HCT116 (cell line): ENCODE measurements at regions of chr6 and their contacts with region 1.

Region 1: GRCh38 chr6:156686995-156687788 is 90.0 kb upstream of the ARID1B start:
- DNase-seq: peak; percentile 40
- ATAC-seq: peak; percentile 87
- H3K4me3 ChIP-seq: peak overlapping the region; percentile 65 to 72
- H3K27ac ChIP-seq: peak overlapping the region; percentile 95
- H3K4me1 ChIP-seq: peaks cover 12 to 24% of the 10 kb centered on the region in 2 experiments
- H3K27me3 ChIP-seq: no peaks in the 10 kb centered on the region
- CTCF ChIP-seq: no peak
- POLR2A ChIP-seq: peak; percentile 39
- RAD21 ChIP-seq: no peak

Region 2: GRCh38 chr6:156662025-156662445 is 25.2 kb before region 1 on chr6:
- CTCF ChIA-PET with region 1: no interaction called
- POLR2A ChIA-PET with region 1: no interaction called
- RAD21 ChIA-PET with region 1: no interaction called
- intact Hi-C with region 1: loop called (anchors 1 kb)
- DNase-seq: peak; percentile 73
- ATAC-seq: peak; percentile 100
- H3K4me3 ChIP-seq: peak overlapping the region; percentile 43 to 54
- H3K27ac ChIP-seq: no peak overlapping the region
- H3K4me1 ChIP-seq: peaks cover 0 to 7% of the 10 kb centered on the region in 2 experiments; a peak in 1 of 4 replicates
- H3K27me3 ChIP-seq: no peaks in the 10 kb centered on the region
- CTCF ChIP-seq: peak; percentile 78 to 97 (median 93)
- POLR2A ChIP-seq: no peak
- RAD21 ChIP-seq: peak; percentile 83

Region 3: DNA sequence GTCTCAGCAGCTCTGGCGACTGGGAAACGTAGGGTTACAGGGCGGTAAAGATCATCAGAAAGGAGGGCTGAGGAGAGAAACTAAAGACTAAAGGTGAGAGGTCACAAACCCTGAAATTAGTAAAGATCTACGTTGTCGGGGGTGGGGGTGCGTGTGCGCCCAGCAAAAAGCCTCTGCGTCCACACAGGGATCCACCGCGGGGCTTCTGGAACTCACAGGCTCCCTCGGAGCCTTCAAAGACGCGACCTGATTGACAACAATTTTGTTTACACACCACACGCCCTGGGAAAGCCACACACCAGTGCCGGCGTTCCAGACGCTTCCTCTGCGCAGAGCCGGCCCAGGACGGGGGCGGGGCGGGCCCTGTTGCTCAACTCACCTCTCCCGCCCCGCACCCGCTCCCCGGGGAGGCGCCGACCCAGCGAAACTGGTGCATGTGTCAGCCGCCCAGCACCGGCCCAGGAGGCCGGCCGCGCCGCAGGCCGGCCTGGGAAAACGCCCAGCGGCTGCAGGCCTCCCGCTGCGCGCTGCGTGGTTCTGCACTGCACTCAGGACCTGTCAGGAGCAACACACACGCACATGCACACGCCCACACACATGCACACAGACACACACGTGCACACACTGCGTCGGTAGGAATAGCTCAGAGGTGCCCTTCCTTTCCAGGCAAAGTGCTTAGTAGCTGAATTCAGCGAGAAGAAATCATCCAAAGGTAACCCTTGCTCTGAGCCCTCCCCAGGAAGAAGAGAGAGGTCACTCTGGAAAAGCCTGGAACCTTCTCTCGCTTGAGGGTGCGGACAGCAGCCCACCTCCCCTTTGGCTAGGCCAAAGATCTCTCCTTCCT is 32.8 kb after region 1 on chr6:
- CTCF ChIA-PET with region 1: no interaction called
- POLR2A ChIA-PET with region 1: no interaction called
- RAD21 ChIA-PET with region 1: no interaction called
- intact Hi-C with region 1: loop called (anchors 5 kb)
- DNase-seq: peak; percentile 72
- ATAC-seq: peak; percentile 90
- H3K4me3 ChIP-seq: peak overlapping the region; percentile 29 to 40
- H3K27ac ChIP-seq: peak overlapping the region; percentile 71
- H3K4me1 ChIP-seq: peaks cover 32 to 34% of the 10 kb centered on the region in 2 experiments
- H3K27me3 ChIP-seq: no peaks in the 10 kb centered on the region
- CTCF ChIP-seq: no peak
- POLR2A ChIP-seq: peak; percentile 41
- RAD21 ChIP-seq: 0 out of 2 replicates have a peak, but pooled peaks have one; percentile 10

Region 4: DNA sequence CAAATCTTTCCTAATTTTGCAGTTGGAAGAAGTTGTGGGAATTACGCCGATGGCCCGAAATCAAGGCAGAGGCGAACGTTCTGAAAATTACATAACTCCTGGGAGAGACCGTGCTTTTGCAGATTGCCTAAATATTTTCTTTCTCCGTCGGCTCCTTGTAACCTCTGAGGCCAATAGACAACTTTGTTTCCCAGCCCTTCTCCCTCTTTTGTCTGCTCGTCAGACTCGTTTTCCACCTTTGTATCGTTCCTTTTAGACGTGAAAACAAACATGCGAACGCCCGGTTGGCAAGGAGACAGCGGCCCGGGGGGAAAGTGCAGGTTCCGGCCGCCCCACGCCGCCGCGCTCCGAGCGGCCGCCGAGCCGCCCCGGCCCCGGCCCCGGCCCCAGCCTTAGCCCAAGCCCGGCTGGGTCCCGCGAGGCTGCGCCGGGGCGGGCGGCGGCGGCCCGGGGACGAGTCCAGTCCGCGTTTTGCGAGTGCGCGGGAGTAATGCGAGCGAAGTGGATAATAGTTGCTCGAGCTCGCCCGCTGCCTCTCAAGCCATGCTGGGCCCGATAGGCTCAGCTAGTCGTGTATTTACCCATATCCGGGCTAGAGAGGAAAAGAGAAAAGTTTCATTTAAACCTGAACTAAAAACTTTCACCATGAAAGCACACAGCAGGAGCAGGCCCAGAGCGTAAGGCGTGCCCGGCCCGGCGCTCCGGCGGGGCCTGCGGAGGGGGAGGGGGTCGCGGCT is 89.8 kb after region 1 on chr6 and contains the start of gene ARID1B:
- CTCF ChIA-PET with region 1: no interaction called
- POLR2A ChIA-PET with region 1: no interaction called
- RAD21 ChIA-PET with region 1: no interaction called
- intact Hi-C with region 1: loop called (anchors 1 kb)
- DNase-seq: no peak
- ATAC-seq: peak; percentile 50
- H3K4me3 ChIP-seq: peak within 1 kb of the TSS; percentile 70 to 77
- H3K27ac ChIP-seq: peak within 1 kb of the TSS; percentile 95
- H3K4me1 ChIP-seq: peaks cover 27 to 40% of the 10 kb centered on the region in 2 experiments
- H3K27me3 ChIP-seq: no peaks in the 10 kb centered on the region
- CTCF ChIP-seq: no peak
- POLR2A ChIP-seq: peak; percentile 58
- RAD21 ChIP-seq: no peak
- total RNA-seq, gene ARID1B: 35.6 TPM